A673 (cell line): ENCODE measurements at regions of chr2 and their contacts with region 1.

Region 1: GRCh38 chr2:11234309-11234708 is 79.0 kb downstream of the SLC66A3 start:
- DNase-seq: peak; percentile 23
- H3K4me3 ChIP-seq: no peak overlapping the region
- H3K27ac ChIP-seq: no peak overlapping the region
- H3K4me1 ChIP-seq: no peaks in the 10 kb centered on the region
- H3K27me3 ChIP-seq: no peaks in the 10 kb centered on the region
- CTCF ChIP-seq: peak; percentile 65

Region 2: DNA sequence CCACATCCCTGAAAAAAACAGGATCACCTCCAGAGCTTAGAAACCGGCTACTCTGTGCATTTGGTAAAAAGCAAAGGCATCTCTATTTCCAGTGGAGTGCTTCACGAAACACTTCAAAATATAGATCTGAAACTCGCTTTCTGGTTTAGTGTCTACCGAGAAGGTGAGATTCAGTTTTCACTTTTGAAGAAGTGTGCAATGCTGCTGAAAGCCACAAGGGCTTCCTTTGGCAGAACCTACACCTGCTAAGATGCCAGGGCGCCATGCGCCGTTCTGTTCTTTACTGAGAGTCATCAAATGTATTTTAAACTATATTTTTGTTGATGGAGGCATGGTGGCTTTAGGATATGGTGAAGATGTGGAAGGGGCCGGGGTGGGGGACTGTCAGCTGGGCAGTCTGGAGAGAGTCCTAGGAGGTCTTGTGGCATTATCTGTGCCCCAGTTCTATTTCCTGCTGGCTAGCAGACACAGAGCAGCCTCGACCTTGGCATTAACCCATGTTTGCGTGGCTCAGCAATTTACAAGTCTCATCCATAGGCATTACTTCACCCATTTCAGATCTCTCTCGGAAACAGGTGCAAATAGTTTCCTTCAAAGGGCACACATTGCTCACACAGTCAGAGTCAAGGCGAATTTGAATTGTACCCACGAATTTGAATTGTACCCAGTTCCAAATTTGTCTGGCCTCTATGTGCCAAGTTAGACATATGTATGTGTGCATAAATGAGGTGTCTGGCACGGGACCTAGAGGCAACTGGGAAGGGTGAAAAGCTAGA is 369.3 kb before region 1 on chr2:
- CTCF ChIA-PET with region 1: no interaction called
- POLR2A ChIA-PET with region 1: no interaction called
- intact Hi-C with region 1: no loop called
- DNase-seq: no peak
- H3K4me3 ChIP-seq: no peak overlapping the region
- H3K27ac ChIP-seq: no peak overlapping the region
- H3K4me1 ChIP-seq: no peaks in the 10 kb centered on the region
- H3K27me3 ChIP-seq: no peaks in the 10 kb centered on the region
- CTCF ChIP-seq: 0 out of 2 replicates have a peak, but pooled peaks have one; percentile 18

Region 3: GRCh38 chr2:11411768-11412448 is 177.6 kb after region 1 on chr2:
- CTCF ChIA-PET with region 1: interaction called, 22 read pairs
- POLR2A ChIA-PET with region 1: no interaction called
- intact Hi-C with region 1: loop called (anchors 1 kb)
- DNase-seq: peak; percentile 76
- H3K4me3 ChIP-seq: peak overlapping the region; percentile 32
- H3K27ac ChIP-seq: no peak overlapping the region
- H3K4me1 ChIP-seq: no peaks in the 10 kb centered on the region
- H3K27me3 ChIP-seq: no peaks in the 10 kb centered on the region
- CTCF ChIP-seq: peak; percentile 86

Region 4: GRCh38 chr2:11446733-11447248 is 212.5 kb after region 1 on chr2:
- CTCF ChIA-PET with region 1: interaction called, 3 read pairs
- POLR2A ChIA-PET with region 1: no interaction called
- intact Hi-C with region 1: loop called (anchors 10 kb)
- DNase-seq: peak; percentile 80
- H3K4me3 ChIP-seq: no peak overlapping the region
- H3K27ac ChIP-seq: no peak overlapping the region
- H3K4me1 ChIP-seq: no peaks in the 10 kb centered on the region
- H3K27me3 ChIP-seq: no peaks in the 10 kb centered on the region
- CTCF ChIP-seq: peak; percentile 90